Posterior vena cava (tissue), 2 donors: ENCODE measurements at regions of chr13 and their contacts with region 1.

Region 1: DNA sequence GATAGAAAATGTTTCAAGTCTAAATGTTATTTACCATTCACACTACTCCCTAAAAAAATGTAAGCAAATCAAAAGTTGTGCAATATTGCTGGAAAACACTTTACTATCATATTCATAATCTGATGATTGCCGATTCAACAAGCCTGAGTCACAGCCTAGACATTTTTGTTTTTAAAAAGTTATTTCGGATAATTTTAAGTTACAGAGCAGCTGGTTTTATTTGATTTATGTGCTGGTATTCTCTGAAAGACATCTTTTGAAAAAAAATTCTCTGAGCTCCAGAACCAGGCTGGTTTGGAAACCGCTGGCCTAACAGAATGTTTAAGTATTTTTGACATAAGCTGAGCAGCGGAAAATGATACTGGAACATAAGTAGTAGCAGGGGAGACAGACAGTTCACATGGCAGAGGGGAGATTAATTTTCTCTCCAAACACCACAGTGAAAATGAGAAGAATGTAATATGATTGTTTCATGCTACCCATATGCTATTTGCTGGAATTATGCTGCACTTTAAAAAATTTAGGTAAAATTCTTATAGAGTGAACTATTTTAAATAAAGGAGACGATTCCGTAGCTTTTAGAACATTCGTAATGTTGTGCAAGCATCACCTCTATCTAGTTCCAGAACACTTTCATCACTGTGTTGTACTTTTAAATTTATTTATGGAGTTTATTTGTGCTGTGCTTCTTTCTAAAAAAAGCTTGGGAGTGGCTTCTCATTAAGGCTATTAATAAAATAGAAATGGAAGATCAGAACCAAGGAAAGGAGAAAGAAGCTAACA is 36.1 kb downstream of the TBC1D4 start:
- DNase-seq: no peak

Region 2: GRCh38 chr13:75465236-75465635 is 19.3 kb after region 1 on chr13:
- intact Hi-C with region 1: loop called in 1 of 2 experiments (anchors 1 kb)
- DNase-seq: no peak